ENCODE measurements at regions of chr16 and their contacts with region 1.

Region 1: DNA sequence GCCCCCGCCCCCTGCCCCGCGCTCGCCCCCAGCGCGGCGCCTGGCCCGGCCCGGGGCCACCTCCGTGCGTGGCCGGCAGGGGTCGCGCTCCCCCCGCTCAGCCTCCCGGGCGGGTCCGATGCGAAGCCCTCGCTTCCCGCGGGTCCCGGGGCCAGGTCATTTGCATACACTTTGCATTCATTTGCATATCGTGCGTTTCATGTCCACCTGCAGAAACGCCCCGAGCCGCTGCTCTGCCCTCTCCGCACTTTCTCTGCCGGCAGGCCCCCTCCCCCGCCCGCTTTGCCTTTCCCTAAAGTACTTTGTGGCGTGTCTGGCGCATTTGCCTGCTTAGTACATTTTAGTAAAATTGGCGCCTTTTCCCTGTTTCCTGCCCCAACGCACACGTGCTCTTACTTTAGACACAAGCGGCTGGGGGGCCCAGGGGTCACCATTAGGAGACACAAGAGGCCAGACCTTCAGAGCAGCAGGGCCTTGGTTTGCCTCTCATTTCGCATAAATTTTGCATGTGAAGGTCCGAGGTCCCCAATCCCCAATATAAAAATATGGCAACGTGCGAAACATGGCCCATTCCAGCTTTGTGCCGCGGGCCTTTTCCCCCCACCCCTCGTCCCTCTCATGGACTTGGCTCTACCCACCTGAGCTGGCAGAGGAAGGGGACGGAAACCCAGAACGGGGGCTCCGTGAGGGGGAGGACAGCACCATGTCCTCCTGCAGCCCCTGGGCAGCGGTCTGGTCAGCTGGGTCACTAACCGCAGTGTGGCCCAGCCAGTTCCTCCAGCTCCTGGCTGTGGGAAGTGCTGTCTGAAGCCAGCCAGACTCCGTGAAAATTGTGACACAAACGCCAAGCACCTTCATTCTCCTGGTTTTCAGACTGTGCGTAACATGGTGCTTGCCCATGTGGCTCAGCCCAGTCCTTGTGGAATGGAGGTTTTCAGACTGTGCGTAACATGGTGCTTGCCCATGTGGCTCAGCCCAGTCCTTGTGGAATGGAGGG is 34.8 kb downstream of the CBFA2T3 start:
- DNase-seq: peak; percentile 48 to 68
- ATAC-seq: peak in 3 of 8 donors; percentile 35 to 54 (median 40)
- H3K4me3 ChIP-seq: peak overlapping the region in 9 of 10 donors; percentile 35 to 83 (median 46)
- H3K27ac ChIP-seq: peak overlapping the region in 5 of 10 donors; percentile 22 to 94 (median 53)
- H3K4me1 ChIP-seq: peaks cover 19 to 44% (median 31%) of the 10 kb centered on the region in 9 donors
- H3K27me3 ChIP-seq: peaks cover 0 to 43% (median 10%) of the 10 kb centered on the region in 7 donors
- CTCF ChIP-seq: peak; percentile 60 to 94 (median 71)

Region 2: GRCh38 chr16:88886845-88887521 is 55.2 kb before region 1 on chr16:
- intact Hi-C with region 1: loop called in 6 of 10 experiments (anchors 1 to 5 kb)
- DNase-seq: peak; percentile 90 to 94
- ATAC-seq: peak; percentile 82 to 94 (median 88)
- H3K4me3 ChIP-seq: peak overlapping the region in 2 of 10 donors; percentile 12 to 22
- H3K27ac ChIP-seq: peak overlapping the region; percentile 63 to 90 (median 82)
- H3K4me1 ChIP-seq: peaks cover 19 to 40% (median 27%) of the 10 kb centered on the region in 9 donors
- H3K27me3 ChIP-seq: peaks cover 0 to under 1% (median 0%) of the 10 kb centered on the region in 7 donors
- CTCF ChIP-seq: peak in 6 of 9 donors; percentile 14 to 62 (median 40)

Region 3: GRCh38 chr16:88899901-88900661 is 42.1 kb before region 1 on chr16:
- intact Hi-C with region 1: no loop called
- DNase-seq: no peak
- ATAC-seq: no peak
- H3K4me3 ChIP-seq: no peak overlapping the region
- H3K27ac ChIP-seq: no peak overlapping the region
- H3K4me1 ChIP-seq: peaks cover 0 to 12% (median 3%) of the 10 kb centered on the region in 9 donors
- H3K27me3 ChIP-seq: no peaks in the 10 kb centered on the region
- CTCF ChIP-seq: no peak

Region 4: GRCh38 chr16:88920618-88921590 is 21.3 kb before region 1 on chr16:
- intact Hi-C with region 1: loop called in 2 of 10 experiments (anchors 1 to 2 kb)
- DNase-seq: peak; percentile 82 to 85
- ATAC-seq: peak; percentile 69 to 90 (median 86)
- H3K4me3 ChIP-seq: peak overlapping the region in 7 of 10 donors; percentile 7 to 48 (median 28)
- H3K27ac ChIP-seq: peak overlapping the region; percentile 58 to 89 (median 78)
- H3K4me1 ChIP-seq: peaks cover 32 to 72% (median 63%) of the 10 kb centered on the region in 9 donors
- H3K27me3 ChIP-seq: no peaks in the 10 kb centered on the region
- CTCF ChIP-seq: no peak

Region 5: GRCh38 chr16:89161763-89162713 is 219.8 kb after region 1 on chr16:
- intact Hi-C with region 1: loop called in 9 of 10 experiments (anchors 2 to 10 kb)
- DNase-seq: no peak
- ATAC-seq: no peak
- H3K4me3 ChIP-seq: no peak overlapping the region
- H3K27ac ChIP-seq: no peak overlapping the region
- H3K4me1 ChIP-seq: peaks cover 0 to 4% (median under 1%) of the 10 kb centered on the region in 9 donors
- H3K27me3 ChIP-seq: peaks cover 0 to 32% (median 5%) of the 10 kb centered on the region in 7 donors
- CTCF ChIP-seq: no peak

Region 6: DNA sequence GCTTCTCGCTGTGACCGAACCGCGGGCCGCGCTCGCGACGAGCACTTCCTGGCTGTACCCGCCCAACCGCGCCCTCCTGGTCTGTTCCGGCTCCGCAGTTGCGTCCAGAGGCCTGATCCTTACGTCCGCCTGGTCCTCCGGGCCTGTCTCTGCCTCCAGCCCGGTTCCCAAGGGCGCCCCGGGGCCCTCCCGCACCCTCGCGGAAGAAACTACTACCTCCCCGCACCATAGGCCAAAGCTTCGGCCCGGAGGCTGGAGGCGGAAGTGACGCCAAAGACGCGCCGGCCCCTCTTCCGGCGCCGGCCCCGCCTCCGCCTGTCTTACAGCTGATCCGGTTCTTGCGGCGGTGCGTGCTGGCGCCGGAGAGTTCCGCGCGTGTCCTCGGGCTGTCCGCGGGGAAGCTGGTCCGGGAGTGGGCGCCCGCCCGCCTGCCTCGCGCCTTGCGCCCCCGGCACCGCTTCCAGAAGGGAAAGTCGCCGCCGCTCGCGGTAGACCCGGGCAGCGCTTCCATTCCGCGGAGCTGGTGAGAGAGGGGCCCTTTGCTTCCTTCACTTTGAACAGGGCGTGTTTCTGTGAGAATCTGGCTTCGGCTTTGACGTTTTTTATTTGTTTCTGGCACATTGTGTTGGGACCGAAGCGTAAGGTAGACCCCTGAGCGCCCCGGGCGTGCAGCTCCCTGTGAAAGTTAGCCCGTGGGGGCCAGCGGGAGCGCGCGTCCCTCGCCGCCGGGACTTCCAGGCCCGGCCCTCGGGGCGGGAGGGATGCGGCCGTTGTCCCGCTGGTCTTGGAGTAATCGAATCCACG is 275.4 kb after region 1 on chr16 and contains the start of gene ZNF778:
- intact Hi-C with region 1: loop called in 8 of 10 experiments (anchors 2 to 10 kb)
- DNase-seq: peak; percentile 82 to 84
- ATAC-seq: peak; percentile 94 to 97 (median 96)
- H3K4me3 ChIP-seq: peak within 1 kb of the TSS; percentile 76 to 99 (median 94)
- H3K27ac ChIP-seq: peak within 1 kb of the TSS; percentile 91 to 99 (median 96)
- H3K4me1 ChIP-seq: peaks cover 0 to 33% (median 29%) of the 10 kb centered on the region in 9 donors
- H3K27me3 ChIP-seq: no peaks in the 10 kb centered on the region
- CTCF ChIP-seq: no peak
- total RNA-seq, gene ZNF778: 5.9 to 11.3 (median 8.8) TPM